Activated T-helper 1 cell treated with anti-CD3 and anti-CD28 coated beads, Interleukin-12 subunit alpha, Interleukin-12 subunit beta, Interleukin-2, Interleukin-4 antibody, amounts not matched to agents 30 ng/mL and 10 ng/mL and 1 ng/mL, durations not matched to agents 14 hours and 24 hours and 36 hours (primary cell): ENCODE measurements at regions of chr13 and their contacts with region 1.

Region 1: GRCh38 chr13:52128714-52129700 is at the start of gene NEK5:
- DNase-seq: peak; percentile 52
- H3K4me3 Mint-ChIP-seq: peak within 1 kb of the TSS; percentile 77
- H3K27ac Mint-ChIP-seq: no peak within 1 kb of the TSS
- H3K4me1 Mint-ChIP-seq: peaks cover 14% of the 10 kb centered on the region
- H3K27me3 Mint-ChIP-seq: peaks cover 8% of the 10 kb centered on the region
- total RNA-seq, gene NEK5: not detected in 2 replicates

Region 2: DNA sequence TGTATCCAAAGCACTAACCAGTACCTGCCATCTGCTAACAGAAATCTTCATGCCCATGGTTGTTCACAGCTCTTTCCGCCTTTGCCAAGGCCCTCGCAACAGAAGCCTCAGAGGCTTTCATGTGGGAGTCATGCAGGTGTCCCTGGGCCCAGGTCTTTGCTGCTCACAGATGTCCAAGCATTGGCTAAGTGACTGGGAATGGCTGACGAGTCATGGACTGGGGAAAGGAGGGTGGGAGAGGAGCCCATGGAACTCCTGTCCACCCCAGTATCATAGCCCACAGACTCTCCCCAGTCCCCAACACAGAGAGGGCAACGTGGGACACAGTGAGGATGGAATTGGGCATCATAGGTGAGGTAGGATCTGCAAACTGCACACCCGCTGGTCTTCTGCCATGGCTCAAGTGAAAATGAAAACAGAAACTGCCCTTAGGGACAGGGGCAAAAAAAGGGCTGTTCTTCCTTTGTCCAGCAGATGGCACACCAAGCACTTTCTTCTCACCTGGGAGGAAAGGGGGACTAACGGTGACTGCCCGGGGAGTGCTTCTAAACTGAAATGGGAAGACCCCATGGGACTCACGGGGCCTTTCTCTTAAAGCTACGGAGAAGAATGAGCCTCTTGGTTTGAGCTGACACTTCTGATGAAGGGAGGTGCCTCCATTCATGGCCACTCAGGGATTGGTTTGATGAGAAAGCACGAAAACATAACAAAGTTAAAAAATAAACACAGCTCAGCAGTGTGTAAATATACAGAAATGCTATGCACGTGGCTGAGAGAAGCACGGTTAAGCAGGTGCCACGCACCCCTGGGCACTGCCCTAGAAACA is 314.0 kb before region 1 on chr13:
- intact Hi-C with region 1: loop called (anchors 5 kb)
- DNase-seq: peak; percentile 66
- H3K4me3 Mint-ChIP-seq: peak overlapping the region; percentile 37
- H3K27ac Mint-ChIP-seq: no peak overlapping the region
- H3K4me1 Mint-ChIP-seq: peaks cover 52% of the 10 kb centered on the region
- H3K27me3 Mint-ChIP-seq: peaks cover 3% of the 10 kb centered on the region

Region 3: DNA sequence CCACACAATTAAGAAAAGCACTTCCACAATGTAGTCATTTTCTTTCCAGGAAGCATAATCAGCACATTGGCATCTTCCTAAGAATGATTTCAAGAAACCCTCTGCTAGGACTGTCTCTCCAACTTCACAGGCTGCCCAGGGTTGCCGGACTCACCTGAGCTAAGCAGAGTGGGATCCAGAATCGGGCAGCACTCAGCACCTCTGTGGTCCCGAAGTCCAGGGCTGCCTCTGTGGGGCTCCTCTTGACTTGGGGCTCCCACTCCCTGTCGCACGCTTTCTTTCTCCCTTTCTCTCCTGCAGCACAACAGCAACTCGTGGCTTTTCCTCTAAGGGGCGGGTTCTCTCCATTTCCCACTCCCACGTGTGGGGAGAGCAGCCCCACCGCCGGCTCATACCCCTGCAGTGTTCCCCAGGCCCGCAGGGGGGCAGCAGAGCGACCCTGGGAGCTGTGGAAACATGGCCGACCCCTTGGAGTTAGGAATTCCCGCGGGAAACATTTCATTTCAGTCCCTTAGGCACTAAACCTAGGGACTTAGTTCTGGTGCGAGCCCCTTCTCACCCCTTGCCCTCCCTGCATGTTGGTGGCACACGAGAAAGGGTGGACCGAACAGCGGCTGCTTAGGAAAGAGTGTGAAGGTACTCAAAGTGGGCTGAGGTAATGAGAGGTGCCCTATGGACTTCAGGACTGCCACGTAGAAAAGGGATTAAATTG is 284.0 kb before region 1 on chr13 and contains the start of gene TMEM272:
- intact Hi-C with region 1: loop called (anchors 5 kb)
- DNase-seq: peak; percentile 28
- H3K4me3 Mint-ChIP-seq: peak within 1 kb of the TSS; percentile 45
- H3K27ac Mint-ChIP-seq: peak within 1 kb of the TSS; percentile 70
- H3K4me1 Mint-ChIP-seq: peaks cover 12% of the 10 kb centered on the region
- H3K27me3 Mint-ChIP-seq: peaks cover 12% of the 10 kb centered on the region
- total RNA-seq, gene TMEM272: 0.26 and 0.88 TPM in 2 replicates

Region 4: DNA sequence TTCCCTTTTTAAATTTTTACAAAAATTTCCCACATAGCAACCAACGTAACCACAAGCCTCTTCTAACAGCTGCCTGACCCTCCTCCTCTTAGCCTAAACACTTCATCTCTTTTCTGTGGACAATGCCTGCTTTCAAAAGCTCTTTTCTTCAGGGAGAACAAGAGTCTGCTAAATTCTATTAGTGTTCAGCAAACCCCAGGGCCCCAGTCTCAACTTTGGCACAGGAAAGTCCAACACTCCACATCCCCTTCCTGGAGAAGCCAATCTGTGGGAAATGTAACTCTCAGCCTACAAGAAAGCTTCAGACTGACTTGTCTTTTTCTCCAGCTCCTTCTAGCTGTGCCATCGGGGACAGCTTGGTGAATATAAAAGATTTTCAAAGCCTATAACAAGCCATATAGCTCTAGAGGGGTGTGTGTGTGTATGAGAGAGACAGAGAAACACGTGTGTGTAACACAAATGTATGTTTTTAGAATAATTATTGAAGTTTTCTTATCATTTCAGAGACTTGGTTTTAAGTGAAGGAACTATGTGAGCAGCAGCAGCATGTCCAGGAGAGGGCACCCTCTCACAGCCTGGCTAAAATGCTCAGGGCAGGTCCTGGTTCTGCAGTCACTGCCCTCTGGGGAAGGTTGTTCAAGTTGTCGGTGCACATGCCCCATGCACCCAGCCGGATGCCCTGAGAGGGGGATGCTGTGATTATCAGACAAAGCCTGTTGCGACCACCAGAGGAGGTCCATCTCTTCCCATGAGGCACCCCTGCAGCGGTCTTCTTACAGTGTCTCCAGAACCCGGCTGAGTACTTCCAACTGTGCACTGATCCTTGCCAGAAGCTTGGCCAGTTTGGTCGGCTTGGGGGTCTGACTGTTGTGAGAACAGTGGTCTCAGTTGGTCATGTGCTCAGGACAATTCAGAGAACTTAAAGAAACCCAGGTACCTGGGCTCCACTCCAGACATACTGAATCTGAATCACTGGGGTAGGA is 232.8 kb before region 1 on chr13:
- intact Hi-C with region 1: loop called (anchors 1 kb)
- DNase-seq: peak; percentile 14
- H3K4me3 Mint-ChIP-seq: no peak overlapping the region
- H3K27ac Mint-ChIP-seq: no peak overlapping the region
- H3K4me1 Mint-ChIP-seq: peaks cover 4% of the 10 kb centered on the region
- H3K27me3 Mint-ChIP-seq: peaks cover 16% of the 10 kb centered on the region

Region 5: GRCh38 chr13:52001120-52001731 is 127.8 kb before region 1 on chr13:
- intact Hi-C with region 1: loop called (anchors 1 kb)
- DNase-seq: no peak
- H3K4me3 Mint-ChIP-seq: no peak overlapping the region
- H3K27ac Mint-ChIP-seq: no peak overlapping the region
- H3K4me1 Mint-ChIP-seq: no peaks in the 10 kb centered on the region
- H3K27me3 Mint-ChIP-seq: peaks cover 22% of the 10 kb centered on the region

Region 6: DNA sequence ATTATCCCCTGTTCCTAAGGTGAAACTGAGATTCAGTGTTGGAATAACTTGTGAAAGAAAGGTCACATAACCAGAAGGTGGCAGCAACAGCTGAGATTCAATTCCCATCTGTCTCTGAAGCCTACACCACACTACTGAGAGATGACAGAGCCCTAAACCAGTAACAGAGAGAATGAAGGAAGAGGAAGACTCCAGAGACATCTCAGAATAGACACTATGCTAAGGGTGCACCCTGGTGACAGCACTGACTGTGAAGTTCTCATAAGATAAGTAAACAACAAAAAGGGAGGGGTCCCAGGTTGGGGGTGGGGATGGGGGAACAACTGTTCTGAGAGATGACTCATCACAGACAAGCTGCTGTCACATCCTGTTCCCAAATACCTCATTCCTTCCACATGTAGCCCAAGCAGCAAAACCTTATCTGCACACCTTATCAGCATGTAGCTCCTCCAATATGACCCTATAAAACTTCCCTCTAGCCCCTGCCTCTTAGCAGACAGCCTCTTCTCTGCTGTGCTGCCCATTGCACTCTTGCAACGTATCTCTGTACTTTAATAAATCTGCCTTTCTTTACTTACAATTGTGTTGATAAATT is 58.0 kb before region 1 on chr13:
- intact Hi-C with region 1: loop called (anchors 2 kb)
- DNase-seq: no peak
- H3K4me3 Mint-ChIP-seq: no peak overlapping the region
- H3K27ac Mint-ChIP-seq: no peak overlapping the region
- H3K4me1 Mint-ChIP-seq: peaks cover 16% of the 10 kb centered on the region
- H3K27me3 Mint-ChIP-seq: peaks cover 8% of the 10 kb centered on the region

Region 7: GRCh38 chr13:52141297-52141696 is 12.3 kb after region 1 on chr13:
- intact Hi-C with region 1: no loop called
- DNase-seq: no peak
- H3K4me3 Mint-ChIP-seq: no peak overlapping the region
- H3K27ac Mint-ChIP-seq: no peak overlapping the region
- H3K4me1 Mint-ChIP-seq: no peaks in the 10 kb centered on the region
- H3K27me3 Mint-ChIP-seq: no peaks in the 10 kb centered on the region

Region 8: DNA sequence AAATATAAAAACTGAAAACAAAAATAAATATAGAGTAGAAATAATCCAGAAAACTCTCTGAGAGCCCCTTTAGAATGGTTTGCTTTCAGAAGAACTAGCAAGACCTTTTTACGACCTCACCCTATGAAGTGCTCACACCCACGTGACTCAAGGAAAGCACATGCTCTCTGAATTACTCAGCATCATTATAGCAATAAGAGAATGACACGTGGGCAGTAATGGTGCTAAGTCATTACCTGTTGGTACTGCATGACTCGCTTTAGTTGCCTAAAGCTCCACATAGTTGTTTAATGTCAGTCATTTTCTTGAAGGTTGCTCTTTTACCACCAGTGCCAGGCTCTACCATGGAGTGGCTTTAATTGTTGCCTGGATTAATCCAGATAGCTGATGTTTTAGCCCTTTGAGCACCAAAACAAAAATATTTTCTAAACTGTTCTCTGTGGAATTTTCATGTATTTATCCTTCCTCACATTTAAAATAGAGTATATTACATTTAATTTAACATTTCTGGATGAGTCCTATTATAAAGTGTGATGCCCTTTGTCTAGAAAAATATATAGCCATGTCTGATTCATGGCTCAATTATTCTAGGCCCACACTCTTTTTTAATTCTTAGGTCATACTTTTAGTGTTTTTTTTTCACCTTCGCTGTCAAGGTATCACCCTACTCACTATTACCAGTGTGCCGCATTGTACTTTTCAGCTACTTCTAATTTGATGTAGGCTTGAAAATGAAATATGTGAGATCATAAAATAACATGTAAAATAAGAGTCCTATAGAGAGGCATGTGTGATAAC is 220.2 kb after region 1 on chr13:
- intact Hi-C with region 1: no loop called
- DNase-seq: no peak
- H3K4me3 Mint-ChIP-seq: no peak overlapping the region
- H3K27ac Mint-ChIP-seq: no peak overlapping the region
- H3K4me1 Mint-ChIP-seq: no peaks in the 10 kb centered on the region
- H3K27me3 Mint-ChIP-seq: peaks cover 2% of the 10 kb centered on the region